Posterior vena cava (tissue), 2 donors: ENCODE measurements at regions of chr10 and their contacts with region 1.

Region 1: GRCh38 chr10:98391578-98391991 is 23.4 kb downstream of the PYROXD2 start:
- DNase-seq: peak; percentile 91

Region 2: DNA sequence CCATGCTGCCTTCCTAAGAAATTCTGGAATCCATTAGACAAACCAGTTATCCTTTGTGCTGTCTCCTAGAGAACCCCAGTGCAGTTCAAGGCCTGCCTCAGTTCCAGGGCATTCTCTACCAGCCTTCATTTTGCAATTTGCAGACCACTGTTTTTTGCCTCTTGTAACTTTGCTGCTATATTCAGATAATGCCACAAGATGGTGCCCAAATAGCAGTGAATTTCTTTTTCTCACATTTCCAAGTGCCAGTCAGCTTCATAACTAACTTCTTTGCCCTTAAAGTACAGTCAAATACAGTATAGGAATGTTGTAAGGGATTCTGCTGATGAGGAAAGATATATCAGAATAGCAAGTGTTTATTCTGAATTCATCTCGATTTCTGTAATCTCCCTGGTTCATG is 148.8 kb before region 1 on chr10:
- intact Hi-C with region 1: loop called in 1 of 2 experiments (anchors 10 kb)
- DNase-seq: no peak

Region 3: GRCh38 chr10:98509745-98510144 is 118.2 kb after region 1 on chr10:
- intact Hi-C with region 1: no loop called
- DNase-seq: no peak